Ovary (tissue), 10 donors: ENCODE measurements at regions of chr7 and their contacts with region 1.

Region 1: DNA sequence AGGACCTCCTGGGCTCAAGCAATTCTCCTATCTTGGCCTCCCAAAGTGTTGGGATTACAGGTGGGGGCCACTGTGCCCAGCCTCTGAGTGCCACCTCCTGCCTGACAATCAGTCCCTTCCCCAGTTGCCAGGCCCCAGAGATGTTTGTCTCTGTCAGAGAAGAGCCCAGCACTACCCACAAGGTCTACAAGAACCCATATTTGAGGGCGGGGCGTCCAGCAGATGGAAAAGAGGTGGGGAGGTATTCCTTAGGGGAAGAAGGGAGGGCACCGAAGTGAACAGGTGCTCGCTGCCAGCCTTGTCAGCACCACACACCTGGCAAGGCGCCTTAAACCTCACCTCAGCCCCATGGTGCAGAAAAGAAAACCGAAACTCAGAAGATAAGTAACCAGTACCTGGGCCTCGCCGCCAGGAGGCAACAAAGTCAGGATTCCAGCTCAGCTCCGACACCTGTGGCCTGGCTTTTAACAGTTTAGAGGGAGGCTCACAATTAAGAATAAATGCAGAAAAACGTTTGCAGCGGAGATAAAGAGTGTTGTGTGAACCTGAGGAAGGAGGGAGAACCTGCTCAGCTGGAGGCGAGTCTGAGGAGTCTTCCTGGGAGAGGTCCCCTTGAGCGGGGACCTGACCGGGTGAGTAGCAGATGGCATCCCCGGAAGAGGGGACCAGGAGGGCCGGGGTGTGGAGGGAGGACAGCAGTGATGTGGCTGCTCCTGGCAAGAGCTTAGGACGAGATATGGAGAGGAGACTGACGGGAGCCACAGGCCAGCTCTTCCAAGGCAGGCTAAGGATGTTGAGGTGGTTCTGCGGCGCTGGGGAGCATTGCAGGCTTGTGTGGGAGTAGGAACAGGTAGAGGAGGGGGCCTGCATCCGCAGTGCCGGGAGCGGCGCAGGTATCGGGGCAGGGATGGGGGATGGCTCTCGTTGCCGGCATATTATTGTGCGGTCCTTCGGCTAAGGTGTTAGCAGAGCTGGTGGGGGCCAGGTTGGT is 77.0 kb upstream of the ANLN start:
- DNase-seq: no peak
- H3K4me3 ChIP-seq: no peak overlapping the region
- H3K27ac ChIP-seq: no peak overlapping the region
- H3K4me1 ChIP-seq: peaks cover 3% of the 10 kb centered on the region
- H3K27me3 ChIP-seq: no peaks in the 10 kb centered on the region
- CTCF ChIP-seq: no peak
- EP300 ChIP-seq: no peak
- POLR2A ChIP-seq: no peak

Region 2: DNA sequence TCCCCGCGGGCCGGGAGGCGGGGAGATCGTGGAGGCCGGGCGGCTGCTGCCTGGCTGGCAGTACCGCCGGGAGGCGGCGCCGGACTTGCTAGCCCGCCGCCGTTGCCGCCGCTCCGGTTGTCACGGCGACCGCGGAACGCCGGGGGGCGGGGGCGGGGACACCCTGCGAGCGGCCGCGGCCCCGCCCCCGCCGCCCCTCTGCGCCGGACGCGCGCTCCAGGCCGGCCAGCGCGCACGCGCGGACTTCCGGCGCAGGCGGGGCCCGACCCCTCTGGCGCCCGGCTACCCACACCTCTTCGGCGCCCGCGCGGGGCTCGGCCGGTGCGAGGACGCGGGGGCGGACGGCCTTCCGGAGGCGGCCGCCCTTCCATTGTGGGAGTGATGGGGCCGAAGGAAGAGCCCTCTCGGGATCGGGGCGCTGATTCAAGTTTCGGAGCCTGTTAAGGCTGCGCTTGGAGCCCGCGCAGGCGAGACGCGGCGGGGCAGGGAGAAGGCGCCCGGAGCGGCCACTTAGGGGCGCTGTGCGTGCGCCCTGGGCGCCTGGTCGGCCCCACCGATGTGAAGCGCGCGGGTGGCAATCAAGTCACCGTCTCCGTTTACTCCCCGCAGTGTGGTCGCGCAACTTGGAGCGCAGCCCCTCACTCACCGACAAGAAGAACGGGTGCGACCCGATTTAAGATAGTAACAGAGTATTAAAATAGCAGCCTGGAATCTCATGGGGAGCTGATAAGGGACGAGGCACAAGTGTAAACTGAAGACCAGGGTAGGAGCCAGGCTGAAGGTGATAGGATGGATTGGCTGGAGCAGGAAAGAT is 1274.9 kb before region 1 on chr7:
- intact Hi-C with region 1: loop called in 1 of 4 experiments (anchors 5 kb)
- DNase-seq: peak; percentile 93 to 97 (median 96)
- H3K4me3 ChIP-seq: peak overlapping the region; percentile 72
- H3K27ac ChIP-seq: peak overlapping the region; percentile 80 to 89
- H3K4me1 ChIP-seq: no peaks in the 10 kb centered on the region
- H3K27me3 ChIP-seq: no peaks in the 10 kb centered on the region
- CTCF ChIP-seq: peak; percentile 70 to 91 (median 74)
- EP300 ChIP-seq: no peak
- POLR2A ChIP-seq: no peak

Region 3: GRCh38 chr7:35906191-35906908 is 406.3 kb before region 1 on chr7:
- intact Hi-C with region 1: loop called in 1 of 4 experiments (anchors 10 kb)
- DNase-seq: peak in 4 of 5 donors; percentile 47 to 76 (median 56)
- H3K4me3 ChIP-seq: no peak overlapping the region
- H3K27ac ChIP-seq: no peak overlapping the region
- H3K4me1 ChIP-seq: peaks cover 1% of the 10 kb centered on the region
- H3K27me3 ChIP-seq: no peaks in the 10 kb centered on the region
- CTCF ChIP-seq: peak; percentile 86 to 94 (median 92)
- EP300 ChIP-seq: no peak
- POLR2A ChIP-seq: no peak

Region 4: DNA sequence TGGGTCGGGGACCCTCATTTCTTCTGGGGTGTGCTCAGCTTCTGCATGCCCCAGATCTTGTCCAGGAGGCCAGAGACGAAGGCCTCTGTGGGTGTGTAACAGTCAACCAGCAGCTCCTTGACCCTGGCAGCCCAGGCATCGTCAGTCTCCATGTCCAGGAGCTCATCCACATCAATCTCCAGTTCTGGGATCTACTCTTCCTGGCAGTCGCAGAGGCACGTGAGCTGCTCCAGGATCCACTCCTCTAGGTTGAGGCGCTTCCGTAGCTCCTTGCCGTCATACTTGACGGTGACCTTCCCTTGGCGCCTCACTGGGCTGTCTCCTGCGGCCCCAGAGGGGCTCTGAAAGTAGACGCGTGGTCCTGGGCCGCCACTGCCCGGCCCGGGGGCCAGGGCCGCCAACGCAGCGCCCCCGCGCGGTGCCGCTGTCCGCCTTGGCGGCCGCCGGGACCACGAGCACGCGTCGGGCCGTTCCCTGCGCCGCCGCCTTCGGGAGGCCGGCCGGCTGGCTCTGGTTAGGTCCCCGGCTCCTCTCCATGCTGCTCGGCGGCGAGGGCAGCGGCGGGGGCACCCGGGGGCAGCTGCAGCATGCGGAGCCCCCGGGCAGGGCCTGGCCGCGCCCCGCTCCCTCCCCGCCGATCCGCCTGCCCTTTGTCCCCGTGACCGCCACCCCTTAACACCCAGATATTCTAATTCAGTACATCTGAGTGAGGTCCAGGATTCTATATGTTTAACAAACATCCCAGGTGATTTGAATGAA is 341.3 kb before region 1 on chr7:
- intact Hi-C with region 1: no loop called
- DNase-seq: no peak
- H3K4me3 ChIP-seq: no peak overlapping the region
- H3K27ac ChIP-seq: no peak overlapping the region
- H3K4me1 ChIP-seq: no peaks in the 10 kb centered on the region
- H3K27me3 ChIP-seq: no peaks in the 10 kb centered on the region
- CTCF ChIP-seq: no peak
- EP300 ChIP-seq: no peak
- POLR2A ChIP-seq: no peak

Region 5: DNA sequence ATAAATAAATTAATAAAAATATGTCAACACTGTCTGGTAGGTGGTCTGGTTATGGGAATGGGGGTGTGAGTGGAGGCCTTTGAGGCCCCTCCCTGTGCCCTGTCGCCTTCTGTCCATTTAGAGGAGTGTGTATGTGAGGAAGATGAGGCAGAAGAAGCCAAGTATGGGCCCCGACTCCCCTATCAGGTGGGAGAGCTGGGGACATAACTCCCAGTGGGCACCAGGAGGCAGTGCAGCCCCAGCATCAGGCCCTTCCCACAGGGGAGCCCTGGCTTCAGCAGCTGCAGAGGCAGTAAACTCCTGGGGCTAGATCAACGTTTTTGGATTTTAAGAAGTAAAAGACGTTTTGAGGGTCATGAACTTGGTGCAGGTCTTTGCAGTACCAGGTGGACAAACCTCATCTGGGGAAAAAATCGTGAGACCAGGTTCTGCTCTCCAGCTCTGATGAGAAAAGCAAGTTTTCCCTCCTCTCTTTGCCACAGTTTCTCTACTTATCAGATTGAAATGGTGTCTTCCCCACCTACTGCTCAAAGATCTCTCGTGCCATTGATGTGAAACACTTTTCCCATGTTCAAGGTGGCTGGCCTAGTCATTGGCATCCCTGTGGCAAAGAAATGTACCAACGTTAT is 327.4 kb before region 1 on chr7:
- intact Hi-C with region 1: loop called in 1 of 4 experiments (anchors 5 kb)
- DNase-seq: peak; percentile 70 to 86 (median 82)
- H3K4me3 ChIP-seq: no peak overlapping the region
- H3K27ac ChIP-seq: no peak overlapping the region
- H3K4me1 ChIP-seq: peaks cover 3% of the 10 kb centered on the region
- H3K27me3 ChIP-seq: no peaks in the 10 kb centered on the region
- CTCF ChIP-seq: peak; percentile 57 to 87 (median 86)
- EP300 ChIP-seq: no peak
- POLR2A ChIP-seq: no peak

Region 6: GRCh38 chr7:36430186-36430585 is 117.5 kb after region 1 on chr7:
- intact Hi-C with region 1: no loop called
- DNase-seq: no peak
- H3K4me3 ChIP-seq: no peak overlapping the region
- H3K27ac ChIP-seq: no peak overlapping the region
- H3K4me1 ChIP-seq: no peaks in the 10 kb centered on the region
- H3K27me3 ChIP-seq: no peaks in the 10 kb centered on the region
- CTCF ChIP-seq: no peak
- EP300 ChIP-seq: no peak
- POLR2A ChIP-seq: no peak